A673 (cell line): ENCODE measurements at regions of chr18 and their contacts with region 1.

Region 1: GRCh38 chr18:68660354-68661183 is 54.3 kb downstream of the TMX3 start:
- DNase-seq: peak; percentile 76
- H3K4me3 ChIP-seq: no peak overlapping the region
- H3K27ac ChIP-seq: no peak overlapping the region
- H3K4me1 ChIP-seq: peaks cover 18% of the 10 kb centered on the region
- H3K27me3 ChIP-seq: no peaks in the 10 kb centered on the region
- CTCF ChIP-seq: peak; percentile 72

Region 2: GRCh38 chr18:67217551-67218166 is 1442.9 kb before region 1 on chr18:
- CTCF ChIA-PET with region 1: interaction called, 6 read pairs
- POLR2A ChIA-PET with region 1: no interaction called
- intact Hi-C with region 1: loop called (anchors 1 kb)
- DNase-seq: peak; percentile 77
- H3K4me3 ChIP-seq: no peak overlapping the region
- H3K27ac ChIP-seq: no peak overlapping the region
- H3K4me1 ChIP-seq: peaks cover 16% of the 10 kb centered on the region
- H3K27me3 ChIP-seq: no peaks in the 10 kb centered on the region
- CTCF ChIP-seq: peak; percentile 73

Region 3: GRCh38 chr18:67359873-67360838 is 1300.4 kb before region 1 on chr18:
- CTCF ChIA-PET with region 1: no interaction called
- POLR2A ChIA-PET with region 1: no interaction called
- intact Hi-C with region 1: no loop called
- DNase-seq: peak; percentile 86
- H3K4me3 ChIP-seq: no peak overlapping the region
- H3K27ac ChIP-seq: peak overlapping the region; percentile 43
- H3K4me1 ChIP-seq: peaks cover 18% of the 10 kb centered on the region
- H3K27me3 ChIP-seq: no peaks in the 10 kb centered on the region
- CTCF ChIP-seq: no peak

Region 4: GRCh38 chr18:67665266-67665665 is 995.3 kb before region 1 on chr18:
- CTCF ChIA-PET with region 1: no interaction called
- POLR2A ChIA-PET with region 1: no interaction called
- intact Hi-C with region 1: loop called (anchors 1 kb)
- DNase-seq: no peak
- H3K4me3 ChIP-seq: no peak overlapping the region
- H3K27ac ChIP-seq: peak overlapping the region; percentile 69
- H3K4me1 ChIP-seq: peaks cover 24% of the 10 kb centered on the region
- H3K27me3 ChIP-seq: no peaks in the 10 kb centered on the region
- CTCF ChIP-seq: no peak

Region 5: GRCh38 chr18:68623342-68623741 is 37.2 kb before region 1 on chr18:
- CTCF ChIA-PET with region 1: no interaction called
- POLR2A ChIA-PET with region 1: no interaction called
- intact Hi-C with region 1: loop called (anchors 2 kb)
- DNase-seq: peak; percentile 92
- H3K4me3 ChIP-seq: no peak overlapping the region
- H3K27ac ChIP-seq: peak overlapping the region; percentile 57
- H3K4me1 ChIP-seq: peaks cover 16% of the 10 kb centered on the region
- H3K27me3 ChIP-seq: no peaks in the 10 kb centered on the region
- CTCF ChIP-seq: peak; percentile 85

Region 6: GRCh38 chr18:68735483-68736343 is 75.1 kb after region 1 on chr18:
- CTCF ChIA-PET with region 1: no interaction called
- POLR2A ChIA-PET with region 1: no interaction called
- intact Hi-C with region 1: loop called (anchors 5 kb)
- DNase-seq: peak; percentile 78
- H3K4me3 ChIP-seq: no peak overlapping the region
- H3K27ac ChIP-seq: no peak overlapping the region
- H3K4me1 ChIP-seq: peaks cover 18% of the 10 kb centered on the region
- H3K27me3 ChIP-seq: no peaks in the 10 kb centered on the region
- CTCF ChIP-seq: peak; percentile 91